ENCODE measurements at regions of chr1 and their contacts with region 1.

Region 1: GRCh38 chr1:236759252-236759859 is 35.7 kb upstream of the MTR start:
- DNase-seq: peak in 3 of 9 experiments; percentile 11 to 68 (median 58)
- ATAC-seq: peak; percentile 31
- H3K4me3 ChIP-seq: no peak overlapping the region
- H3K4me3 Mint-ChIP-seq: no peak overlapping the region
- H3K27ac ChIP-seq: no peak overlapping the region
- H3K27ac Mint-ChIP-seq: no peak overlapping the region
- H3K4me1 ChIP-seq: no peaks in the 10 kb centered on the region
- H3K4me1 Mint-ChIP-seq: no peaks in the 10 kb centered on the region
- H3K27me3 ChIP-seq: no peaks in the 10 kb centered on the region
- H3K27me3 Mint-ChIP-seq: no peaks in the 10 kb centered on the region
- CTCF ChIP-seq: peak; percentile 78

Region 2: GRCh38 chr1:236748471-236748870 is 10.9 kb before region 1 on chr1:
- CTCF ChIA-PET with region 1: interaction called, 11 read pairs
- POLR2A ChIA-PET with region 1: no interaction called
- intact Hi-C with region 1: no loop called
- DNase-seq: no peak
- ATAC-seq: no peak
- H3K4me3 ChIP-seq: no peak overlapping the region
- H3K4me3 Mint-ChIP-seq: no peak overlapping the region
- H3K27ac ChIP-seq: no peak overlapping the region
- H3K27ac Mint-ChIP-seq: no peak overlapping the region
- H3K4me1 ChIP-seq: no peaks in the 10 kb centered on the region
- H3K4me1 Mint-ChIP-seq: no peaks in the 10 kb centered on the region
- H3K27me3 ChIP-seq: no peaks in the 10 kb centered on the region
- H3K27me3 Mint-ChIP-seq: peaks cover 14% of the 10 kb centered on the region
- CTCF ChIP-seq: no peak

Region 3: GRCh38 chr1:236806634-236807033 is 47.3 kb after region 1 on chr1:
- CTCF ChIA-PET with region 1: no interaction called
- POLR2A ChIA-PET with region 1: no interaction called
- intact Hi-C with region 1: no loop called
- DNase-seq: no peak
- ATAC-seq: no peak
- H3K4me3 ChIP-seq: no peak overlapping the region
- H3K4me3 Mint-ChIP-seq: no peak overlapping the region
- H3K27ac ChIP-seq: no peak overlapping the region
- H3K27ac Mint-ChIP-seq: no peak overlapping the region
- H3K4me1 ChIP-seq: peaks cover 9% of the 10 kb centered on the region
- H3K4me1 Mint-ChIP-seq: peaks cover 42% of the 10 kb centered on the region
- H3K27me3 ChIP-seq: no peaks in the 10 kb centered on the region
- H3K27me3 Mint-ChIP-seq: no peaks in the 10 kb centered on the region
- CTCF ChIP-seq: no peak

Region 4: DNA sequence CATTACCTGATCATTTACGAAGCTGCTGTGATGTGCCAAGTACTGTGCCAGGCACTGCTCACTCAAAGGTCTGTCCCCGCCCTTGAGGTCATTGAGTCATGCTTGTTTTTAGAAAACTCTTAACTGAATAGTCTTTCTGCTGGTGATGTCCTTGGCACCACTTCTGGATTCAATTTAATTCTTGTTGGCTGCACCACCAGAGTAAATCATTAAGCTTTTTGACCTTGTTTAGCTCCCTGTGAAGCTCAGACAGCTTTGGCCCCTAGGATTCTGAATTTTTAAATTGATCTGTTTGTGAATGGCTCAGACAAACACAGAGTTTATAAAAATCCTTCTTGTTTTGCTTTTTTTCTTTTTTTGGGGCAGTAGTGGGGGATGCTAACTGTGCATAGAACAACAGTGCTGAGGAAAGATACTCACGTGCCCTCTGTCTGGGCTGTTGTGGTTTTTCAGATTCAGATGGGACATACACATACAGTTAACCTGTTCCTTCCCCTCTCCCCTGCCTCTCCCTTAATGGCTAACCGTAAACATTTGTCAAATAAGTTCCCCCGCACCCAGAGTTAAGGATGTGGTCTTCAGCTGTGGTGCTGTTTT is 103.4 kb after region 1 on chr1:
- CTCF ChIA-PET with region 1: interaction called, 17 read pairs
- POLR2A ChIA-PET with region 1: no interaction called
- intact Hi-C with region 1: no loop called
- DNase-seq: peak in 2 of 9 experiments; percentile 5 to 39
- ATAC-seq: peak; percentile 78
- H3K4me3 ChIP-seq: no peak overlapping the region
- H3K4me3 Mint-ChIP-seq: peak overlapping the region; percentile 32
- H3K27ac ChIP-seq: no peak overlapping the region
- H3K27ac Mint-ChIP-seq: peak overlapping the region; percentile 88
- H3K4me1 ChIP-seq: peaks cover 27% of the 10 kb centered on the region
- H3K4me1 Mint-ChIP-seq: peaks cover 33% of the 10 kb centered on the region
- H3K27me3 ChIP-seq: no peaks in the 10 kb centered on the region
- H3K27me3 Mint-ChIP-seq: no peaks in the 10 kb centered on the region
- CTCF ChIP-seq: no peak

Region 5: GRCh38 chr1:236868625-236869467 is 109.5 kb after region 1 on chr1:
- CTCF ChIA-PET with region 1: interaction called, 17 read pairs
- POLR2A ChIA-PET with region 1: no interaction called
- intact Hi-C with region 1: loop called (anchors 1 kb)
- DNase-seq: peak in 8 of 9 experiments; percentile 10 to 76 (median 46)
- ATAC-seq: peak; percentile 78
- H3K4me3 ChIP-seq: no peak overlapping the region
- H3K4me3 Mint-ChIP-seq: no peak overlapping the region
- H3K27ac ChIP-seq: no peak overlapping the region
- H3K27ac Mint-ChIP-seq: no peak overlapping the region
- H3K4me1 ChIP-seq: no peaks in the 10 kb centered on the region
- H3K4me1 Mint-ChIP-seq: no peaks in the 10 kb centered on the region
- H3K27me3 ChIP-seq: no peaks in the 10 kb centered on the region
- H3K27me3 Mint-ChIP-seq: no peaks in the 10 kb centered on the region
- CTCF ChIP-seq: peak; percentile 94

Region 6: GRCh38 chr1:237025358-237026074 is 266.2 kb after region 1 on chr1:
- CTCF ChIA-PET with region 1: no interaction called
- POLR2A ChIA-PET with region 1: no interaction called
- intact Hi-C with region 1: no loop called
- DNase-seq: no peak
- ATAC-seq: no peak
- H3K4me3 ChIP-seq: no peak overlapping the region
- H3K4me3 Mint-ChIP-seq: no peak overlapping the region
- H3K27ac ChIP-seq: no peak overlapping the region
- H3K27ac Mint-ChIP-seq: no peak overlapping the region
- H3K4me1 ChIP-seq: no peaks in the 10 kb centered on the region
- H3K4me1 Mint-ChIP-seq: no peaks in the 10 kb centered on the region
- H3K27me3 ChIP-seq: no peaks in the 10 kb centered on the region
- H3K27me3 Mint-ChIP-seq: peaks cover 15% of the 10 kb centered on the region
- CTCF ChIP-seq: no peak

Region 7: DNA sequence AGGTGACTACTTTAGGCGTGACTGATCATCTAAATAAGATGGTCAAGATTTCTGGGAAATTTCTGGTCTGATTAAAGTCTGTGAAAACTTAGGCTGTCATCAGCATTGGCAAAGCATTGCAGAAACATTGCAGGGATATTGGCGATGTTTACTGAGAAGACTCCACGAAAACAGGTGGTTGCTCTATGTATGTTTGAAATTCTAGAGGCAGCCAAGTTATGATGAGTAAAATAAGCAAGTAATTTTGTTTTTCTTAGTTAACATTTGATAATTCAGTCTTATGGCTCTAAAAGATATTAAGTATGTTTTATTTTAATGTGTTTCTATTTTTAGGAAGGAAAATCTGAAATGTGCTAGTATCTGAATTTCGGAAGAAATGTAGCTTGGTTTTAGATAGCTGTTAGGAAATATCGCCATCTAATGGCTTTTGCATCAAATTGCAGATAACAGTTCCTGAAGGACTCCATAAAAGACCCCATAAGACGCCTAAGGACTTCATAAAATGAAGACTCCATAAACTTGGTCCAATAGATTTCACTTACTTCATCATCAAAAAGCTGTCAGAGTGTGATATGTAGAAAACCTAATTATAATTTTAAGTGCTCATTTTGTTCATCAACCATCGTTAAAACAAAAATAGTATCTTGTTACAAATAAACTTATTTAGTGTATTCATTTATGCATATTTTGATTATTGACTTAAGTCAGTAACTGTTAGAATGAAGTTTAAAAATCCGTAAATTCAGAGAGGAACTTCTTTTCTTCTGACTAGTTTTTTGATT is 627.2 kb after region 1 on chr1:
- CTCF ChIA-PET with region 1: interaction called, 3 read pairs
- POLR2A ChIA-PET with region 1: no interaction called
- intact Hi-C with region 1: loop called (anchors 5 to 10 kb)
- DNase-seq: peak in 2 of 9 experiments; percentile 10 to 35
- ATAC-seq: no peak
- H3K4me3 ChIP-seq: no peak overlapping the region
- H3K4me3 Mint-ChIP-seq: no peak overlapping the region
- H3K27ac ChIP-seq: no peak overlapping the region
- H3K27ac Mint-ChIP-seq: no peak overlapping the region
- H3K4me1 ChIP-seq: no peaks in the 10 kb centered on the region
- H3K4me1 Mint-ChIP-seq: no peaks in the 10 kb centered on the region
- H3K27me3 ChIP-seq: no peaks in the 10 kb centered on the region
- H3K27me3 Mint-ChIP-seq: peaks cover 5% of the 10 kb centered on the region
- CTCF ChIP-seq: no peak

Region 8: DNA sequence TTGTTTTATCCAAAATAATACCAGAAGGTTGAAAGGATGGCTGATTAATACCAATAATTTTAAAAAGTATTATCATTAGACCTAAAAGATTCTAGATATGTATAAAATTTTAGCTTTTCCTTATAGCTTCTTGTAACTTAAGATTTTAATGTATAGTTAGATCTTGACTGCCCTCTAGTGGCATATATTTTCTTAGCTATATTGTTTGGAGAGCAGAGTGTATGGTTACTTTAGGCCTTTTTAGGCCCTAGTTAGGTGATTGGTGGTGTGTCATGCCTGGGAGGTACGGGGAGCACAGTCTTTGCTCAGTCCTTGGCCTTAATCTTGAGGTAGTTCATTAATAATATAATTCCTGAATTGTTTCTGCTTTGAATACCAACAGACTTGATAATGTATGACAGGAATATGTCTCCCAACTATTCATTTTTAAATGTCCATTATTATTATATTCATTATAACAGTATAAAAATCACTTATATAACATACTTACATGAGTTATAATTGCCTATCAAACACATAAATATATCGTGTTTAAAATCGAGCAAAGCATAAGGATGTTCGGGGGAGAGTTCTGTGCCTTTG is 803.0 kb after region 1 on chr1:
- CTCF ChIA-PET with region 1: interaction called, 12 read pairs
- POLR2A ChIA-PET with region 1: no interaction called
- intact Hi-C with region 1: loop called in 1 of 2 experiments (anchors 1 kb)
- DNase-seq: peak in 2 of 9 experiments; percentile 54 to 62
- ATAC-seq: no peak
- H3K4me3 ChIP-seq: no peak overlapping the region
- H3K4me3 Mint-ChIP-seq: no peak overlapping the region
- H3K27ac ChIP-seq: no peak overlapping the region
- H3K27ac Mint-ChIP-seq: no peak overlapping the region
- H3K4me1 ChIP-seq: no peaks in the 10 kb centered on the region
- H3K4me1 Mint-ChIP-seq: no peaks in the 10 kb centered on the region
- H3K27me3 ChIP-seq: no peaks in the 10 kb centered on the region
- H3K27me3 Mint-ChIP-seq: peaks cover 11% of the 10 kb centered on the region
- CTCF ChIP-seq: peak; percentile 62

Measured in CD8-positive, alpha-beta T cell (primary cell).